Astrocyte of the cerebellum (primary cell): ENCODE measurements at regions of chr6 and their contacts with region 1.

Region 1: DNA sequence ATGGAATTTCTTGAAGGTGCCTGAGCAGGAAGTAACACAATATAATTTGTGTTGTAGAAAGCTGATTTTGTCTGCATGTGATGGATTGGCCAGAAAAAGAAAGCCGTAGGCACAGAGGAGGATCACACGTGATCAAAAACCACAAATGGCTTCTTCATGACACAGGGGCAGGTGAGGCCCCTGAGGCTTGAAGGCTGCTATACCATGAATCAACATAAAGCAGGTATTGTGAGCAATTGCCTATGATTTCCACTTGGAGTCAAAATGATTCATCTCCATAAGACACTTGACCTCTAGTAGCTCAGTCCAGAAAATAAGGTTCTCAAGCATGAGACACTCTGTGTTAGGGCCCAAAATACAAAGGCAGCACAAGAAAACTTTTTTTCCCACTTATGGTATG is 42.4 kb upstream of the EYA4 start:
- DNase-seq: no peak
- H3K4me3 ChIP-seq: no peak overlapping the region
- CTCF ChIP-seq: no peak

Region 2: DNA sequence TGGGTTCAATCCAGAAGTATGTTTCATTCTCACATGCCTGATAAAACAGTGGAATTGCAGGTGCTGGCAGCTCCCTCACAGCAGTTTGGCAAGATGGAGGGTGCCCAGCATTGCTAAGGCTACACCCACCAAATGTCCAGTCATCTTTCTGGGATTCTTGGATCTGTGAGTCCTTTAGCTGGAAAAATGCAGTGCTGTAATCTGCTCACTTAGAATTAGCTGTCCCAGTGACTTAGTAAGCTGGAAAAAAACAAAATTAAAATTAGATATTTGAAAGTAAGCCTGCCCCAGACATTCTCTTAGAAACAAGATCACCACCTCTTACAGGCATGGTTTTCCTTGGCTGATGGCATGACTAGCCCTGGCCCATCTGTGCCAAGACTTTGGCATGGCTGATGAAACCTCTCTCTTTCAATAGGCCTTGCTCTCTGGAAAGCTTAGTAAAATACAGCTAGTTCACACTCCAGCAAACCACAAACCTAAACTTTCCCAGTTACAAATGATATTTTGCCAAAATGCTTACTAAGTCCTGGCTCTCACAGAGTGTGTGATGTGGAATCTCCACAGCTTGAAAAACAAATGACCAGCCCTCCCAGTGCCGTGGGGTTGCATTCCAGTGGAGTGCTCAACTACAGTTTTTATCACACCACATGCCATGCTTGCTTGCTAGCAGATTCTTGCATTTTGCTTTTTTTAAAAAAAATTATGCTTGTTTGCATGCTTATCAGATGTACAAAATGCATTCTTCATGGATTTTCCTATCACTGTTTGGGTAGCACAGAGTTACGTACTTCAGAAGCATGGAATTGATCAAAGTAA is 303.9 kb after region 1 on chr6:
- in situ Hi-C with region 1: loop called (anchors 10 kb)
- DNase-seq: peak; percentile 98
- H3K4me3 ChIP-seq: no peak overlapping the region
- CTCF ChIP-seq: no peak